CD4-positive, alpha-beta T cell (primary cell): ENCODE measurements at regions of chr16 and their contacts with region 1.

Region 1: GRCh38 chr16:695355-696089 is 5.3 kb upstream of the WDR24 start:
- DNase-seq: peak; percentile 40 to 86 (median 73)
- ATAC-seq: peak; percentile 73
- H3K4me3 ChIP-seq: peak overlapping the region; percentile 69
- H3K4me3 Mint-ChIP-seq: peak overlapping the region; percentile 80
- H3K27ac ChIP-seq: no peak overlapping the region
- H3K27ac Mint-ChIP-seq: peak overlapping the region; percentile 72
- H3K4me1 ChIP-seq: peaks cover 59% of the 10 kb centered on the region
- H3K4me1 Mint-ChIP-seq: peaks cover 11% of the 10 kb centered on the region
- H3K27me3 ChIP-seq: peaks cover 0 to 2% of the 10 kb centered on the region in 2 experiments
- H3K27me3 Mint-ChIP-seq: no peaks in the 10 kb centered on the region
- CTCF ChIP-seq: no peak

Region 2: GRCh38 chr16:442976-443375 is 252.5 kb before region 1 on chr16:
- CTCF ChIA-PET with region 1: no interaction called
- POLR2A ChIA-PET with region 1: no interaction called
- intact Hi-C with region 1: no loop called
- DNase-seq: no peak
- ATAC-seq: no peak
- H3K4me3 ChIP-seq: no peak overlapping the region
- H3K4me3 Mint-ChIP-seq: no peak overlapping the region
- H3K27ac ChIP-seq: no peak overlapping the region
- H3K27ac Mint-ChIP-seq: no peak overlapping the region
- H3K4me1 ChIP-seq: no peaks in the 10 kb centered on the region
- H3K4me1 Mint-ChIP-seq: peaks cover 5% of the 10 kb centered on the region
- H3K27me3 ChIP-seq: no peaks in the 10 kb centered on the region
- H3K27me3 Mint-ChIP-seq: no peaks in the 10 kb centered on the region
- CTCF ChIP-seq: no peak

Region 3: GRCh38 chr16:684067-684794 is 11.3 kb before region 1 on chr16 and contains the start of gene JMJD8:
- CTCF ChIA-PET with region 1: no interaction called
- POLR2A ChIA-PET with region 1: interaction called, 55 read pairs
- intact Hi-C with region 1: no loop called
- DNase-seq: peak; percentile 90 to 99 (median 96)
- ATAC-seq: peak; percentile 59
- H3K4me3 ChIP-seq: peak within 1 kb of the TSS; percentile 63
- H3K4me3 Mint-ChIP-seq: peak within 1 kb of the TSS; percentile 83
- H3K27ac ChIP-seq: peak within 1 kb of the TSS; percentile 62 to 70
- H3K27ac Mint-ChIP-seq: peak within 1 kb of the TSS; percentile 42
- H3K4me1 ChIP-seq: peaks cover 69% of the 10 kb centered on the region
- H3K4me1 Mint-ChIP-seq: peaks cover 9% of the 10 kb centered on the region
- H3K27me3 ChIP-seq: no peaks in the 10 kb centered on the region
- H3K27me3 Mint-ChIP-seq: no peaks in the 10 kb centered on the region
- CTCF ChIP-seq: no peak
- total RNA-seq, gene JMJD8: 22.0 to 23.6 TPM

Region 4: DNA sequence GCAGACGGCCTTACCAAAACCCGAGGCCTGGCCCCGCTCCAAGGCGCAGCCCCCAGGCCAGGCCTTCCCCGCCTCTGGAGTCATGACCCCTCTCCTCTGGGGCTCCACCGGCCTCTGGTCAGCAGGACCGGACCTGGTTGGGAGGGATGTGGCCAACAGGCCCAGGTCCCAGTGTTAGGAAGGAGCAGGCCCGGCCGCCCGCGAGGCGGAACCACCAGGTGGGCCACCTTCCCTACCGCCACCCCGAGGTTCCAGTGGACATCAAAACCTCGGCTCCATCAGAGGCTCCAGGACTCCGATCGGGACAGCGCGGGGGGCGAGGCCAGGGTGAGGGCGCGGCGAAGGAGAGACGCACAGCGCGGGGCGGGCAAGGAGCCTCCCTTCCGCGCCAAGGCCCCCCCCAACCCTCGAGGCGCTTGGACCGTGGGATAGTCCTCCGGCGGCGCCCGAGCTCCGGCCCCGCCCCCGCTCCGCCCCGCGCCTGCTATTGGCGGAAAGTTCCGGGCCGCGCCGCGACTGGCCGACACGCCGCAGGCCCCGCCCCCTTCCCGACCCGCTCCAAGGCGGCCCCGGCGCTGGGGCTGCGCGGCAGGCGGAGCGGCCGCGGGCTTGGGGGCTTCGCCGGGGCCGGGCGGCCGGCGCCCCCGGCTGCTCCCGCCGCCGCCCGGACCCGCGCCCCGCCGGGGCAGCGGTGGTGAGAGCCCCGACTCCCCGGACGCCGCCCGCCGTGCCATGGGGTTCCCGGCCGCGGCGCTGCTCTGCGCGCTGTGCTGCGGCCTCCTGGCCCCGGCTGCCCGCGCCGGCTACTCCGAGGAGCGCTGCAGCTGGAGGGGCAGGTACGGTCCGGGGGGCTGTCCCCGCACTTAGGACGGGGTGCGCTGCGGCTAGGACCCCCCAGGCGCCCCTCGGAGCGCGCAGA is 19.3 kb after region 1 on chr16 and contains the start of gene METRN:
- CTCF ChIA-PET with region 1: interaction called, 3 read pairs
- POLR2A ChIA-PET with region 1: interaction called, 22 read pairs
- intact Hi-C with region 1: no loop called
- DNase-seq: peak; percentile 76 to 95 (median 88)
- ATAC-seq: peak; percentile 92
- H3K4me3 ChIP-seq: peak within 1 kb of the TSS; percentile 12
- H3K4me3 Mint-ChIP-seq: peak within 1 kb of the TSS; percentile 69
- H3K27ac ChIP-seq: no peak within 1 kb of the TSS
- H3K27ac Mint-ChIP-seq: no peak within 1 kb of the TSS
- H3K4me1 ChIP-seq: peaks cover 33% of the 10 kb centered on the region
- H3K4me1 Mint-ChIP-seq: peaks cover 18% of the 10 kb centered on the region
- H3K27me3 ChIP-seq: peaks cover 25 to 30% of the 10 kb centered on the region in 2 experiments
- H3K27me3 Mint-ChIP-seq: peaks cover 21% of the 10 kb centered on the region
- CTCF ChIP-seq: no peak
- total RNA-seq, gene METRN: 2.6 to 3.2 TPM

Region 5: GRCh38 chr16:728131-728889 is 32.8 kb after region 1 on chr16:
- CTCF ChIA-PET with region 1: no interaction called
- POLR2A ChIA-PET with region 1: interaction called, 23 read pairs
- intact Hi-C with region 1: no loop called
- DNase-seq: peak in 12 of 14 experiments; percentile 42 to 92 (median 56)
- ATAC-seq: peak; percentile 74
- H3K4me3 ChIP-seq: peak overlapping the region; percentile 41
- H3K4me3 Mint-ChIP-seq: peak overlapping the region; percentile 38
- H3K27ac ChIP-seq: no peak overlapping the region
- H3K27ac Mint-ChIP-seq: no peak overlapping the region
- H3K4me1 ChIP-seq: peaks cover 26% of the 10 kb centered on the region
- H3K4me1 Mint-ChIP-seq: no peaks in the 10 kb centered on the region
- H3K27me3 ChIP-seq: no peaks in the 10 kb centered on the region
- H3K27me3 Mint-ChIP-seq: no peaks in the 10 kb centered on the region
- CTCF ChIP-seq: no peak

Region 6: GRCh38 chr16:1413684-1414531 is 718.4 kb after region 1 on chr16:
- CTCF ChIA-PET with region 1: no interaction called
- POLR2A ChIA-PET with region 1: no interaction called
- intact Hi-C with region 1: loop called in 1 of 2 experiments (anchors 10 kb)
- DNase-seq: peak; percentile 45 to 82 (median 62)
- ATAC-seq: peak; percentile 63
- H3K4me3 ChIP-seq: peak overlapping the region; percentile 77
- H3K4me3 Mint-ChIP-seq: peak overlapping the region; percentile 90
- H3K27ac ChIP-seq: peak overlapping the region in 1 of 2 donors; percentile 77
- H3K27ac Mint-ChIP-seq: peak overlapping the region; percentile 85
- H3K4me1 ChIP-seq: peaks cover 29% of the 10 kb centered on the region
- H3K4me1 Mint-ChIP-seq: peaks cover 21% of the 10 kb centered on the region
- H3K27me3 ChIP-seq: no peaks in the 10 kb centered on the region
- H3K27me3 Mint-ChIP-seq: no peaks in the 10 kb centered on the region
- CTCF ChIP-seq: peak; percentile 65